GM12878 (cell line): ENCODE measurements at regions of chr13 and their contacts with region 1.

Region 1: GRCh38 chr13:111337206-111337605 is 16.8 kb downstream of the TEX29 start:
- DNase-seq: no peak
- ATAC-seq: no peak
- H3K4me3 ChIP-seq: no peak overlapping the region
- H3K27ac ChIP-seq: no peak overlapping the region
- H3K4me1 ChIP-seq: no peaks in the 10 kb centered on the region
- H3K27me3 ChIP-seq: no peaks in the 10 kb centered on the region
- CTCF ChIP-seq: no peak
- EP300 ChIP-seq: no peak
- POLR2A ChIP-seq: no peak
- RAD21 ChIP-seq: no peak

Region 2: DNA sequence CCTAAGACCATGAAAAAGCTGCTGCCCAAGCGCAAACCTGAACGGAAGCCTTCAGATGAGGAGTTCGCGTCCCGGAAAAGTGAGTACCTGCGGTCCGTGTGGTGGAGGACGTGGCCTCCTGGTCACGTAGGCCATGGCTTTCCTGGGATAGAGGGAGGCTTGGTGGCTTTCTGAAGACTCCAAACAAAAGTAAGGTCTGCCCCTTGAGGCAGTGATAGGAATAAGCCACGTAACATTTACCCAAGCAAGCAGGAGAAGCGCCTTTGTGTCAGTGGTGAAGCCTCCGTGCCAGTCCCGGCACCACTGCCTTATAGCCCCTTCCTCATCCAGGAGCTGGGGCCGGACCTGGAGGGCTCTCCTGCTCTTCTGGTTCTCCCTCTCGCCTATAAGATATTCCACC is 51.0 kb before region 1 on chr13:
- CTCF ChIA-PET with region 1: no interaction called
- POLR2A ChIA-PET with region 1: no interaction called
- RAD21 ChIA-PET with region 1: no interaction called
- SMC1A ChIA-PET with region 1: no interaction called
- in situ Hi-C with region 1: loop called (anchors 5 kb)
- intact Hi-C with region 1: no loop called
- DNase-seq: no peak
- ATAC-seq: no peak
- H3K4me3 ChIP-seq: no peak overlapping the region
- H3K27ac ChIP-seq: no peak overlapping the region
- H3K4me1 ChIP-seq: no peaks in the 10 kb centered on the region
- H3K27me3 ChIP-seq: no peaks in the 10 kb centered on the region
- CTCF ChIP-seq: no peak
- EP300 ChIP-seq: no peak
- POLR2A ChIP-seq: no peak
- RAD21 ChIP-seq: no peak

Region 3: GRCh38 chr13:111323950-111324651 is 13.1 kb before region 1 on chr13:
- CTCF ChIA-PET with region 1: no interaction called
- POLR2A ChIA-PET with region 1: no interaction called
- RAD21 ChIA-PET with region 1: no interaction called
- SMC1A ChIA-PET with region 1: no interaction called
- in situ Hi-C with region 1: no loop called
- intact Hi-C with region 1: no loop called
- DNase-seq: no peak
- ATAC-seq: no peak
- H3K4me3 ChIP-seq: no peak overlapping the region
- H3K27ac ChIP-seq: no peak overlapping the region
- H3K4me1 ChIP-seq: no peaks in the 10 kb centered on the region; the same call in 1 of the 2 replicates
- H3K27me3 ChIP-seq: no peaks in the 10 kb centered on the region
- CTCF ChIP-seq: no peak
- EP300 ChIP-seq: no peak
- POLR2A ChIP-seq: no peak
- RAD21 ChIP-seq: no peak